Panc1 (cell line): ENCODE measurements at regions of chr19 and their contacts with region 1.

Region 1: DNA sequence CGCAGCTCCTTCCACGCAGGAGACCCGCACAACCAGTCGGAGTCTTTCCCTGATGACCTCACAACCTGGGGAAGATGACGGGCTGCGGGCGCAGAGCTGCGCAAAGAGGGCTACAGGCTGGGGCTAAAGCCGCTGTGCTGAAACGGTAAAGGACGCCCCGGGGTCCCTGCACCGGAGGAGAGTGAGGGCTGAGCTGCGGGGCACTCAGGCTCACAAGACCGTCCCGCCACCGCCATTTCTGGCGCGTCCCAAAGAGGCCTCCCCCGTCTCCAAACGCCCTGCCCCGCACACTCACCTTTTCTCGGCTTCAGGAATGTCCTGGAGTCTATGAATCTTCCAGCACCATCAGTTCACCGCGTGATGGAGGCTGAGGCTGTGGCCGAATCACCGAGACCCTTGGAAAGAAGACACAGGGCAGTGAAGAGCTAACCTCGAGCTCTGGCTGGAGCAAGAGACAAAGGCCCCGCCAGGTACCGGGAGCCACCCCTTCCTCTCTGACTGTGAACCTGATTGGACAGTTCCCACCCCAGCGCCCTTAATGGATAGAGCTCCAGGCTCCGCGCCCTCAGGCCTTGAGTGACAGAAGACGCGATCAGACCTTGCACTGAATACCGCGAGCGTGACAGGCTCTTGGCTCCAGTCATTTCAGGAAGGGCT is 41.8 kb upstream of the ZNF429 start:
- DNase-seq: peak; percentile 38
- ATAC-seq: peak; percentile 100
- H3K4me3 ChIP-seq: peak overlapping the region; percentile 77 to 85
- H3K27ac ChIP-seq: peak overlapping the region; percentile 70
- H3K4me1 ChIP-seq: no peaks in the 10 kb centered on the region
- H3K27me3 ChIP-seq: no peaks in the 10 kb centered on the region
- CTCF ChIP-seq: no peak

Region 2: DNA sequence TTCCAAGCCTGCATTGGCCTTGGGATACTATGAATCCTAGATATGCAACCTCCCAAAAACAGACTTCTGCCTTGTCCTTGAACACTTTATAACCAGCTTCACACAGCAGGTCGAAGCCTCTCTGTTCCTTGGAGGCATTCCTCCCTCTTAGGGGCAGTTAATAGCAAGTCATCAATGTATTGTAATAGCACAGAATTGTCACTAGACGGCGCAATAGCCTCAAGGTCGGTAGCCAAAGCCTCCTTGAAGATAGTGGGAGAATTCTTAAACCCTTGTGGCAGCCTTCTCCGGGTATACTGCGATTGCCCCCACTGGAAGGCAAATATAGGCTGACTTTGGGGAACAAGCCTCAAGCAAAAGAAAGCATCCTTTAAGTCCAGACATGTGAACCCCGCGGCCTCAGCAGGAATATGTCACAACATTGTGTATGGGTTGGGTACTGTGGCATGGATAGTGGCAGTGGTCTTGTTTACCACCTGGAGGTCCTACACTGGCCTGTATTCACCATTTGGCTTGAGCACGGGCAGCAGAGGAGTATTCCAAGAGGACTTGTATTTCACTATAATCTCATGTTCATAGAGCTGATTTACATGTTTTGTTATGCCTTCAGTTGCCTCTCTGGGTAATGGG is 260.6 kb before region 1 on chr19:
- CTCF ChIA-PET with region 1: no interaction called
- POLR2A ChIA-PET with region 1: no interaction called
- in situ Hi-C with region 1: no loop called
- intact Hi-C with region 1: loop called (anchors 10 kb)
- DNase-seq: peak; percentile 22
- ATAC-seq: peak; percentile 77; the same call in 1 of the 2 replicates
- H3K4me3 ChIP-seq: no peak overlapping the region
- H3K27ac ChIP-seq: no peak overlapping the region
- H3K4me1 ChIP-seq: no peaks in the 10 kb centered on the region
- H3K27me3 ChIP-seq: no peaks in the 10 kb centered on the region
- CTCF ChIP-seq: peak; percentile 84

Region 3: DNA sequence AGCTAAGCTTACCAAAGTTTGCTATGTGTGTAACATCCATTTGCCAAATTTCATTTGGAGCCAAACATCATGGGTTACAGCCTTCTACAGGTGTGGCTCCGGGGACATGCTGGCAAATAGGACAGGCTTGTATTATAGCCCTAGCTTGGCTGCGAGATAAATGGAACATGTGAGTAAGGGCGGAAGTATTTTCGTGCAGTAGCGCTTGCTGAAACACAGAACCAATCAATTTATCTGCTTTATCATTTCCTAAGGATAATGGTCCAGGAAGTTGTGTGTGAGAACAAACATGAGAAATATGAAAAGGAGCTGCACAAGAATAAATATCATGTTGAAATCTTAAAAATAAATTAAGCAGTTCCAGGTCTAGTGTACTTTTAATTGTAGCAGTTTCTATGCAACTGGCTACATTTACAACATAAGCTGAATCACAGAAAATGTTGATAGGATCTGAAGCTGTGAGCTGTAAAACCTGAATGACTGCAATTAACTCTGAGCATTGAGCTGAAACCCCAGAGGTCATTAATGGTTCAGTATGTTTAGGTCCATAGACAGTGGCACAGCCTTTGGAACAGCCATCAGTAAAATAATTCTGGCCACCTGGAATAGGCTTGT is 326.0 kb after region 1 on chr19:
- CTCF ChIA-PET with region 1: no interaction called
- POLR2A ChIA-PET with region 1: interaction called, 13 read pairs
- in situ Hi-C with region 1: no loop called
- intact Hi-C with region 1: no loop called
- DNase-seq: no peak
- ATAC-seq: no peak
- H3K4me3 ChIP-seq: no peak overlapping the region
- H3K27ac ChIP-seq: no peak overlapping the region
- H3K4me1 ChIP-seq: no peaks in the 10 kb centered on the region
- H3K27me3 ChIP-seq: no peaks in the 10 kb centered on the region
- CTCF ChIP-seq: no peak